Activated CD4-positive, alpha-beta memory T cell treated with anti-CD3 and anti-CD28 coated beads, Interleukin-2, amount 10 ng/mL, durations not matched to agents 7 days and 5 days (primary cell): ENCODE measurements at regions of chr1 and their contacts with region 1.

Region 1: DNA sequence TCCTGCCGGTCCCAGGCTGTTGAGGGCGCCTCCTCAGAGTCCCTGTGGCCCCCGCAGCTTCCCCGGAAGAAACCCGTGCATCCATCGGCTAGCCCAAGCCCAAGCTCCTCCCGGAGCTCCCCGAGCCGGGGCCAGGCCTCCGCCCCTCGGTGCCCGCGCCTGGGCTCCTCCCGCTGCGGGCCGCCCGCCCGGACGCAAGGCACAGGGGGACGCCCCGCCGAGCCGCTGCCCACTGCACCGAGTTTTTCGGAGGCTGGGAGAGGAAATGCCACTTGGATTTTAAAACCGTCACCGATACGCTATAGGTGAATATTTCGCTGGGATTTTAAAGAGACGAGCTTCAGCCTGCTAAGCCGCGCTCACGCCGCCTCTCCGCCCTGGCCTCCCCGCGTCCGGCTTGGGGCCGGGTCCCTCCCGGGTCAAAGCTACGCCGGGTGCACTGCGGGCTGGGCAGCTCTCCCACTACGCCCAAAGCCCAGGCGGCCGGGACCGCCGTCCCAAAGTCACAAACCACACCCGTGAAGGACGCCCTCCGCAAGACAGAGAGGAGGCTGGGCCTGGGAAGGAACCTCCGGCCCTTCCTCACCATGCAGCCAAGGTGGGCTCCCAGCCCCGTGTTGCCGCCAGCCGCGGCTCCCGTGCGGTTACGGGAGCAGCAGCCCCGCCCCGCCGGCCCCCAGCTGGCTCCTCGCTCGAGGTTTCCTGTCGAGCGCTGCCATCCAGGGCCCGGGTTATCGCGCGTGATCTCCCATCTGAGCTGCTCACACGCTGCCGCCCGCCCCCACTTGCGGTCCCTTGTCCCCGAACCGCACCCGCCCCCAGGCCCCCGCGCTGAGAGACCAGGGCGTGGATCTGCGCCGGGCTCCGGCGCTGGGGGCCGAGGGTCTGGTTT is 63.2 kb downstream of the CD247 start:
- DNase-seq: peak; percentile 85
- H3K4me3 Mint-ChIP-seq: peak overlapping the region; percentile 75
- H3K27ac Mint-ChIP-seq: peak overlapping the region; percentile 75
- H3K4me1 Mint-ChIP-seq: peaks cover 66% of the 10 kb centered on the region
- H3K27me3 Mint-ChIP-seq: no peaks in the 10 kb centered on the region

Region 2: DNA sequence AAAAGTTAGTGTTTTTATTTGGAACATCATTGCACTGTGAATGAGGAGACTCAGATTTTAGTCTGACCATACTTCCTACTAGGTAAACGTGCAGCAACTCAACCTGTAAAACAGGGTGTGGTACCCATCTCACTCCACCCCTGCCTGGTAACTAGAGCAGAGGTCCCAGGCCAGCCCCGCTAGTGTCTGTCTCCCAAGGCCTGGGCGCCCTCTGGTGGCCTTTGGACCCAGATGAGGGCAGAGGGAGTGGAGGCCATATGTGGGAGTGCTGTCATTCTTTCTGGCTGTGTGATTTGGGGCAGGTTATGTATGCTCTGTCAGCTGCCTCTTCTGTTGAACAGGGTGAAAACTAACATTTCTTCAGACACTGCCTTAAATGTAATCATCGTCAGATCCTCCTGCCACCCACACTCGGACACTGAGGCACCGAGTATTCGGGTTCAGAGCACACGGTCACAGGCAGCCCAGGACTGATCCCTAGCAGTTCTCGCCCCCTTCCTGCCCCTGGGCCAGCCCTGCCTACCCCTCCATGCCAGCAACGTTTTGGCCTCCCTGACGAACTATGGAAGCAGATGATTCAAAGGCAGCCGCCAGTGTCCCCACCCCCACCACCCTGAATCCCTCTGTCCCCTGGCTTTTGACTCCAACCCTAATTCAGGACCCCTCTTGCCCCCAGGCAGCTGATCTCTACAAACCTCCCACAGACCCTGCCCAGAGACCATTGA is 12.9 kb before region 1 on chr1:
- CTCF ChIA-PET with region 1: interaction called, 17 read pairs
- POLR2A ChIA-PET with region 1: interaction called, 46 read pairs
- DNase-seq: peak; percentile 90
- H3K4me3 Mint-ChIP-seq: no peak overlapping the region
- H3K27ac Mint-ChIP-seq: peak overlapping the region; percentile 44
- H3K4me1 Mint-ChIP-seq: peaks cover 86% of the 10 kb centered on the region
- H3K27me3 Mint-ChIP-seq: no peaks in the 10 kb centered on the region

Region 3: DNA sequence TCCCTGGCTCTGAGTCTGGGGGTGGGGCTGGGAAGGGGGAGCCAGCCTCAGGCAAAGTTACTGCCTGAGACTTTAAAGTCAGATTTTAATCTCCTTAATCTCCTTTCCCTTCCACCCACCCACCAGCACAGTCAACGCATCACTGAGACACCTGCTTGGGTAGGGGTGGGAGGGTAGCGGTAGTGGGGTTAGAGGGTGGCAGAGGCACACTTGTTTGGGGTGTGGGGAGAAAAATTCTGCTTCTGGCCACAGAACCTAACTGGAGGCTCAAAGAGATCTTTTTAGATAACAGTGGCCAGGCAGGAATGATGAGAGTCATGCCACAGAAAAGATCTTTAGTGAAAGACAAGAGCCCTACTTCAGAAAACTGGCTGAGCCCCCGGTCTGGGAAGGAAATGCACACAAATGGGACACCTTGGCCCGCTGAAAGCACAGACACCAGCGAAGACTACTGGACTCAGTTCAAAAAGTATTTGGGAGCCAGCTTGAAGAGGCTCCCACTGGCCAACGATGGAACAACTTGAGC is 19.1 kb after region 1 on chr1:
- CTCF ChIA-PET with region 1: interaction called, 4 read pairs
- POLR2A ChIA-PET with region 1: interaction called, 15 read pairs
- DNase-seq: no peak
- H3K4me3 Mint-ChIP-seq: no peak overlapping the region
- H3K27ac Mint-ChIP-seq: peak overlapping the region; percentile 48
- H3K4me1 Mint-ChIP-seq: peaks cover 65% of the 10 kb centered on the region
- H3K27me3 Mint-ChIP-seq: no peaks in the 10 kb centered on the region

Region 4: GRCh38 chr1:167489571-167490340 is 34.6 kb after region 1 on chr1:
- CTCF ChIA-PET with region 1: interaction called, 4 read pairs
- POLR2A ChIA-PET with region 1: interaction called, 50 read pairs
- DNase-seq: no peak
- H3K4me3 Mint-ChIP-seq: peak overlapping the region; percentile 36
- H3K27ac Mint-ChIP-seq: peak overlapping the region; percentile 71
- H3K4me1 Mint-ChIP-seq: peaks cover 94% of the 10 kb centered on the region
- H3K27me3 Mint-ChIP-seq: no peaks in the 10 kb centered on the region

Region 5: GRCh38 chr1:167533851-167534300 is 78.7 kb after region 1 on chr1:
- CTCF ChIA-PET with region 1: interaction called, 36 read pairs
- POLR2A ChIA-PET with region 1: interaction called, 3 read pairs
- DNase-seq: peak; percentile 68
- H3K4me3 Mint-ChIP-seq: no peak overlapping the region
- H3K27ac Mint-ChIP-seq: no peak overlapping the region
- H3K4me1 Mint-ChIP-seq: peaks cover 7% of the 10 kb centered on the region
- H3K27me3 Mint-ChIP-seq: no peaks in the 10 kb centered on the region